GM12878 (cell line): ENCODE measurements at regions of chr13 and their contacts with region 1.

Region 1: GRCh38 chr13:23510979-23511735 is 59.1 kb upstream of the TNFRSF19 start:
- DNase-seq: peak; percentile 62
- ATAC-seq: peak; percentile 94
- H3K4me3 ChIP-seq: no peak overlapping the region
- H3K27ac ChIP-seq: peak overlapping the region; percentile 50
- H3K4me1 ChIP-seq: peaks cover 14% of the 10 kb centered on the region
- H3K27me3 ChIP-seq: no peaks in the 10 kb centered on the region; a peak in 1 of 4 replicates
- CTCF ChIP-seq: peak; percentile 42 to 61 (median 60); a peak in 5 of 6 replicates
- EP300 ChIP-seq: no peak
- POLR2A ChIP-seq: no peak
- RAD21 ChIP-seq: peak; percentile 93

Region 2: GRCh38 chr13:23570099-23570920 is 59.2 kb after region 1 on chr13 and contains the start of gene TNFRSF19:
- CTCF ChIA-PET with region 1: interaction called, 8 read pairs
- POLR2A ChIA-PET with region 1: no interaction called
- RAD21 ChIA-PET with region 1: interaction called, 5 read pairs
- SMC1A ChIA-PET with region 1: interaction called, 6 read pairs
- in situ Hi-C with region 1: loop called (anchors 5 kb)
- intact Hi-C with region 1: loop called (anchors 5 kb)
- DNase-seq: no peak
- ATAC-seq: peak; percentile 55
- H3K4me3 ChIP-seq: peak within 1 kb of the TSS; percentile 71
- H3K27ac ChIP-seq: peak within 1 kb of the TSS; percentile 91
- H3K4me1 ChIP-seq: peaks cover 17% of the 10 kb centered on the region
- H3K27me3 ChIP-seq: no peaks in the 10 kb centered on the region; a peak in 1 of 4 replicates
- CTCF ChIP-seq: 0 out of 6 replicates have a peak, but pooled peaks of 1 of the 3 experiments have one; percentile 4
- EP300 ChIP-seq: no peak
- POLR2A ChIP-seq: peak; percentile 55; the same call in 1 of the 2 replicates
- RAD21 ChIP-seq: no peak; the same call in 1 of the 2 replicates
- polyA plus RNA-seq, gene TNFRSF19: 16.4 to 17.4 TPM

Region 3: GRCh38 chr13:23707674-23708073 is 196.5 kb after region 1 on chr13:
- CTCF ChIA-PET with region 1: interaction called, 12 read pairs
- POLR2A ChIA-PET with region 1: no interaction called
- RAD21 ChIA-PET with region 1: interaction called, 7 read pairs
- SMC1A ChIA-PET with region 1: no interaction called
- in situ Hi-C with region 1: no loop called
- intact Hi-C with region 1: loop called (anchors 2 kb)
- DNase-seq: no peak
- ATAC-seq: peak; percentile 66
- H3K4me3 ChIP-seq: no peak overlapping the region
- H3K27ac ChIP-seq: no peak overlapping the region
- H3K4me1 ChIP-seq: peaks cover 12% of the 10 kb centered on the region
- H3K27me3 ChIP-seq: no peaks in the 10 kb centered on the region; a peak in 1 of 4 replicates
- CTCF ChIP-seq: peak in 2 of 3 experiments; percentile 39 to 40; a peak in 5 of 6 replicates
- EP300 ChIP-seq: no peak
- POLR2A ChIP-seq: no peak
- RAD21 ChIP-seq: peak; percentile 50